Activated B cell treated with CpG ODN at 0.5 μM for 24 hours (primary cell): ENCODE measurements at regions of chr17 and their contacts with region 1.

Region 1: DNA sequence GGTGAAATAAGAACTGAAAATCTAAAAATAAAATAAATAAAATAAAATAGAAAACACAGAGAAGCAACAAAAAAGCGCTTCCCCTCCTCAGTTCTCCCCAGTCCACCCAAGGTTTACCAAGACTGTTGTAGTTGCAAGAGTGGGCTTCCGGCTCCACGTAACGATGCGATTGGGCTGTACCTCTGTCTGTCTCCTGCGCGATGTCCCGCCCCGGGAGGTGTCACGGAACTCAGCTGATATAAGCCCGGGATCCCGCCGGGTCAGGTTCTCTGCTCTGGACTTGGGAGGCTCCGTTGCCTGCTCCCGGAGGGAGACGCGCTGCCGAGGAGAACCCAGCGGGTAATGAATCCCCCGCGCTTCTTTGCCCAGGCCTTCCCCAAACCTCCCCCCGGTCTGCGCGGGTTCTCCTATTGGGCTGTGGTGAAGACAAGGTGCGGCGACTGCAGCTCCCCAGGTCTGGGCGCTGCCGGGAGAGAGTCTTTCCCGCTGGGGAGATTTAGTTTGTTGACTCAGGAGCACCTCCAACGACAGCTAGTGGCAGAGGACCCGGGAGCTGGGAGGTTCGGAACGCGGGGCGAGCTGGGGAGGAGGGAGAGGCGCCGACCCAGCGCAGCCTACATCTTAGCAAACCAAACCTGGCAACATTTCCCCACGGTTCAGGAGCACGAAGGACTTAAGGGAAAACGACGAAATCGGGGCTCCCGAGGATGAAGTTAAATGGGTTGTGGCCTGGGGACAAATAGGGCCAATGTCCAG is at the start of gene SLFN5:
- DNase-seq: peak; percentile 88
- ATAC-seq: peak; percentile 84
- H3K4me3 Mint-ChIP-seq: peak within 1 kb of the TSS; percentile 97
- H3K27ac Mint-ChIP-seq: peak within 1 kb of the TSS; percentile 94
- H3K4me1 Mint-ChIP-seq: peaks cover 25% of the 10 kb centered on the region
- H3K27me3 Mint-ChIP-seq: no peaks in the 10 kb centered on the region
- CTCF ChIP-seq: no peak
- total RNA-seq, gene SLFN5: 15.2 and 15.3 TPM in 2 replicates

Region 2: DNA sequence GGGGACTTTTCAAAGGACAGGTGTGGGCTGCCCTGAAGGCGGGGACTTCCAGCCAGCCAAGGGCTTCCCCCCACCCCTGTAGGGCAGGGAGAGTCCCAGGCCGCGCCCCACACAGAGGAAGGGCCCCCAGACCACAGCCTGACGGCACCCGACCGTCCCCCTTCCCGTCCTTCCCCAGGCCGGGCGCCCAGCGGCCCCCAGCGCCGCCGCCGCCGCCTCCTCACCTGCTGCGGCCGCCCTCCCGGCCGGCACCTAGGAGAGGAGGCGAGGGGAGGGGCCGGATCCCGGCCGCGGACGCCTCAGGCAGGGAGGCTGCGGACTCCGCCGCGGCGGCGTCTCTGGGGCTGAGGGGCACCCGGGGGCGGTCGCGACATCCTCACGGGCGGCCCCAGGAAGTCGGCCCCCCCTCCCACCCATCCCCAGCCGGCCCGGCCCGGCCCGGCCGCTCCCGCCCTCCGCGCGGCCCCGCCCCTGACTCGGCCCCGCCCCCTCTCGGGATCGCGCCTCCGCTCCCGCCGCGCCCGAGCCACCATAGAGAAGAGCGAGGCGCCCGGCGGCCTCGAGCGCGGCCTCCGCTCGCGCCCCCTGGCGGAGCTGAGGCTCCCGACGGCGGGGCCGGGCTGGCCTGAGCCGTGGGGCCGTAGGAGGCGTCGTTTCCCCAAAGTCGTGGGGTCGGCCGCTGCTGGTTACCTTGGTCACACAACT is 153.9 kb before region 1 on chr17:
- CTCF ChIA-PET with region 1: no interaction called
- POLR2A ChIA-PET with region 1: no interaction called
- intact Hi-C with region 1: loop called (anchors 1 kb)
- DNase-seq: peak; percentile 92
- ATAC-seq: peak; percentile 81
- H3K4me3 Mint-ChIP-seq: peak overlapping the region; percentile 91
- H3K27ac Mint-ChIP-seq: peak overlapping the region; percentile 92
- H3K4me1 Mint-ChIP-seq: peaks cover 33% of the 10 kb centered on the region
- H3K27me3 Mint-ChIP-seq: no peaks in the 10 kb centered on the region
- CTCF ChIP-seq: peak; percentile 40

Region 3: GRCh38 chr17:35227546-35227945 is 15.4 kb before region 1 on chr17:
- CTCF ChIA-PET with region 1: no interaction called
- POLR2A ChIA-PET with region 1: no interaction called
- intact Hi-C with region 1: no loop called
- DNase-seq: no peak
- ATAC-seq: no peak
- H3K4me3 Mint-ChIP-seq: no peak overlapping the region
- H3K27ac Mint-ChIP-seq: no peak overlapping the region
- H3K4me1 Mint-ChIP-seq: no peaks in the 10 kb centered on the region
- H3K27me3 Mint-ChIP-seq: peaks cover 33% of the 10 kb centered on the region
- CTCF ChIP-seq: no peak

Region 4: GRCh38 chr17:35373534-35373983 is 130.6 kb after region 1 on chr17 and contains the start of gene SLFN11:
- CTCF ChIA-PET with region 1: no interaction called
- POLR2A ChIA-PET with region 1: interaction called, 4 read pairs
- intact Hi-C with region 1: loop called (anchors 1 kb)
- DNase-seq: peak; percentile 55
- ATAC-seq: peak; percentile 76
- H3K4me3 Mint-ChIP-seq: peak within 1 kb of the TSS; percentile 99
- H3K27ac Mint-ChIP-seq: peak within 1 kb of the TSS; percentile 98
- H3K4me1 Mint-ChIP-seq: peaks cover 50% of the 10 kb centered on the region
- H3K27me3 Mint-ChIP-seq: no peaks in the 10 kb centered on the region
- CTCF ChIP-seq: no peak
- total RNA-seq, gene SLFN11: 19.2 and 22.4 TPM in 2 replicates

Region 5: DNA sequence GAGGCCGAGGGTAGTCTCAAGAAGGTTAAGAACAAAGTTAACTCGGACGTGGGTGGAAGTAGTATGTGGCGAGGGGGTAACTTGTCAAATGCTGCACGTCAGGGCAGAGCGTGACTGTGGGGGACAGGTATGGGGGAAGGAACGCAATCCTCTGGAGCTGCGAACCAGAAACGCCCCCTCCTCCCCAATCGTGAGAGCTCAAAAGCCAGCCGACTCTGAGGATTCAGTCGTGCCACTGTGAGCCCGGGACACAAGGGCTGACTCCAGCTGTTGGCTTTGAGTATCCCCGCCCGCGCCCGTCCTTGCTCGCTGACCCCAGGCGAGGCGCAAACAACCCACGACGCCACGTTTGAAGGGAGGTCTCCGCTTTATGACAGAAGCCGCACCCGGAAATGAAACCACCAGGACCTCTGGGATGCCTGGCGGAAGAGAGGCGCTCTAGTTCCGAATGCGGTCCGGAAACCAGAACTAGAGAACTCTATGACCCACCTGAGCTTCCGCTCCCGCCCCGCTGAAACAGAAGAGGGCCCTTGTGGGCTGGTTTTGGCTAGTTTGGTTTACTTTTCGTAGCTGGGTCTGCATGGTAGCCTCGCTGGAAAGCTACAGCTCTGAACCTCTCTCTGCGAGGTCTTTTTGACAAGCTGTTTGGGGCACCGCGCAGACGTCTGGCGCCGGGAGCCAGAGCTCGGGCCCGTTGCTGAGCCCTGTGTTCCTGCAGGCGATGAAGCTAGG is 335.4 kb after region 1 on chr17 and contains the start of gene PEX12:
- CTCF ChIA-PET with region 1: no interaction called
- POLR2A ChIA-PET with region 1: interaction called, 8 read pairs
- intact Hi-C with region 1: loop called (anchors 2 kb)
- DNase-seq: peak; percentile 71
- ATAC-seq: peak; percentile 95
- H3K4me3 Mint-ChIP-seq: peak within 1 kb of the TSS; percentile 96
- H3K27ac Mint-ChIP-seq: peak within 1 kb of the TSS; percentile 98
- H3K4me1 Mint-ChIP-seq: peaks cover 26% of the 10 kb centered on the region
- H3K27me3 Mint-ChIP-seq: no peaks in the 10 kb centered on the region
- CTCF ChIP-seq: no peak
- total RNA-seq, gene PEX12: 4.1 and 4.8 TPM in 2 replicates

Region 6: DNA sequence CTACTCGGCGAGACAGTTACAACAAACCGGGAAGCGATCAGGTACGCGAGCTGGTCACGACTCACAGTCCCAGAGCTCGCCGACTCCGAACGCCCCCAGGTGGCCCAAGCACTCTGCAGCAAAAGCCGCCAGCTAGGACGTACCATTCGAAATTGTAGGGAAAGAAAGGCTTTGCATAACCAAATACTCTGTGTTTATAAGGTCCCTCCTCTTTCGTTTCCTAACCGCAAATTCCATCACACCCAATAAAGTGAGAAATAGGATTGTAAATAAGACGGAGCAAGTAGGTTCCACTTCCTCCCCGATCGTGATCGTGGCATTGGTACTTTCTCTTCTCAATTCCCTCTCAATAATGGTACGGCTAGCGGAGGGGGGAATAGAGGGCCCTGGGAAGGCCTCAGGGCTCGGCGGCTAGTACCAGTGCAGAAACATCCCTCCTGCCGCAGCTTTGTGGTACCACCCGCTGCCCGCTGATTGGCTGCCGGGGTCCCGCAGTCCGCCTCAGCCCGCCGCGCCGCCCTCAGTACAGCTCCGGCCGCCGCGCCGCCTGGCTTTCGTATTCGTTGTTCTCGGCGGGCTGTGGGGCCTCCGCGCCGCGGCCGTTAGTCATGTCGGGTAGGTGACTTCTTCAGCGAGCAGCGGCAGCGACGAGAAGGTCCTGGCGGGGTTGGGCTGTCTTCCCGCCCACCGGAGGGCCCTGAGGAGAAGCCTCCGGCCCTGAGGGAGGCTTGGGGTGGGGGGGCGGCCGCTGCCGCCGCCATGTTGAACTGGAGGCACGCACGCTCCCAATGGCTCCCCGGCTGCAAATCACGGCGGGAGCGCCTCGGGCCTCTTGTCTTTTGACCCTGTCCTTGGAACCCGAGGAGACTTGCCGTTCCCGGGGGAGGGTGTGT is 566.2 kb after region 1 on chr17 and contains the start of gene TAF15:
- CTCF ChIA-PET with region 1: no interaction called
- POLR2A ChIA-PET with region 1: no interaction called
- intact Hi-C with region 1: loop called (anchors 2 kb)
- DNase-seq: peak; percentile 91
- ATAC-seq: peak; percentile 88
- H3K4me3 Mint-ChIP-seq: peak within 1 kb of the TSS; percentile 93
- H3K27ac Mint-ChIP-seq: peak within 1 kb of the TSS; percentile 100
- H3K4me1 Mint-ChIP-seq: peaks cover 55% of the 10 kb centered on the region
- H3K27me3 Mint-ChIP-seq: no peaks in the 10 kb centered on the region
- CTCF ChIP-seq: no peak
- total RNA-seq, gene TAF15: 224 and 243 TPM in 2 replicates